ENCODE measurements at regions of chr1 and their contacts with region 1.

Region 1: GRCh38 chr1:16078925-16079656 is 5.6 kb upstream of the FAM131C start:
- DNase-seq: peak; percentile 54 to 87 (median 76)
- ATAC-seq: peak; percentile 83
- H3K4me3 ChIP-seq: peak overlapping the region; percentile 41 to 53
- H3K4me3 Mint-ChIP-seq: peak overlapping the region; percentile 81
- H3K27ac ChIP-seq: peak overlapping the region in 1 of 2 experiments; percentile 28
- H3K27ac Mint-ChIP-seq: peak overlapping the region; percentile 32
- H3K4me1 ChIP-seq: peaks cover 6% of the 10 kb centered on the region
- H3K4me1 Mint-ChIP-seq: peaks cover 11% of the 10 kb centered on the region
- H3K27me3 ChIP-seq: peaks cover 0 to under 1% of the 10 kb centered on the region in 2 experiments
- H3K27me3 Mint-ChIP-seq: peaks cover 9% of the 10 kb centered on the region
- CTCF ChIP-seq: peak; percentile 82

Region 2: GRCh38 chr1:16067127-16067768 is 11.8 kb before region 1 on chr1:
- CTCF ChIA-PET with region 1: interaction called, 40 read pairs
- POLR2A ChIA-PET with region 1: no interaction called
- intact Hi-C with region 1: no loop called
- DNase-seq: no peak
- ATAC-seq: no peak
- H3K4me3 ChIP-seq: no peak overlapping the region
- H3K4me3 Mint-ChIP-seq: no peak overlapping the region
- H3K27ac ChIP-seq: no peak overlapping the region
- H3K27ac Mint-ChIP-seq: no peak overlapping the region
- H3K4me1 ChIP-seq: peaks cover 6% of the 10 kb centered on the region
- H3K4me1 Mint-ChIP-seq: peaks cover 14% of the 10 kb centered on the region
- H3K27me3 ChIP-seq: peaks cover 2% of the 10 kb centered on the region in 2 experiments
- H3K27me3 Mint-ChIP-seq: peaks cover 7% of the 10 kb centered on the region
- CTCF ChIP-seq: no peak

Region 3: DNA sequence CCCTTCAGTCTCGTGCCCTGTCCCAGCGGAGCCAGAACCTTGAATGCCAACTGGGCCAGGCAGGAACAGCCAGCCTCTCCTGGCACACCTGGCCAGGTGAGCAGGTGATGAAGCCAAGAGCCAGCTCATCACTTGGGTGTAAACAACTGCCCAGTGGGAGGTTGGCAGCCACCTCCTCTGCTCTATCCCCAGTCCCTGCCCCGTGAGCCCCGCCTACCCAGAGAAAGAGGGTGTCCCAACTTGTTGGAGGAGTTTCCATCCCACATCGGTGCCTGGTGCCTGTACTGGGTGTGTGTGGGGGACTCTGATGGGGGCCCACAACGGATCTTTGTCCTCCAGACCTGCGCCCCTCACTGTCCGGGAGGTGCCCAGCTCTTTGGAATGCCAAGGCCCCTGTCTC is 12.2 kb after region 1 on chr1:
- CTCF ChIA-PET with region 1: interaction called, 11 read pairs
- POLR2A ChIA-PET with region 1: no interaction called
- intact Hi-C with region 1: no loop called
- DNase-seq: no peak
- ATAC-seq: no peak
- H3K4me3 ChIP-seq: no peak overlapping the region
- H3K4me3 Mint-ChIP-seq: no peak overlapping the region
- H3K27ac ChIP-seq: no peak overlapping the region
- H3K27ac Mint-ChIP-seq: no peak overlapping the region
- H3K4me1 ChIP-seq: no peaks in the 10 kb centered on the region
- H3K4me1 Mint-ChIP-seq: no peaks in the 10 kb centered on the region
- H3K27me3 ChIP-seq: no peaks in the 10 kb centered on the region
- H3K27me3 Mint-ChIP-seq: peaks cover 1% of the 10 kb centered on the region
- CTCF ChIP-seq: no peak

Region 4: DNA sequence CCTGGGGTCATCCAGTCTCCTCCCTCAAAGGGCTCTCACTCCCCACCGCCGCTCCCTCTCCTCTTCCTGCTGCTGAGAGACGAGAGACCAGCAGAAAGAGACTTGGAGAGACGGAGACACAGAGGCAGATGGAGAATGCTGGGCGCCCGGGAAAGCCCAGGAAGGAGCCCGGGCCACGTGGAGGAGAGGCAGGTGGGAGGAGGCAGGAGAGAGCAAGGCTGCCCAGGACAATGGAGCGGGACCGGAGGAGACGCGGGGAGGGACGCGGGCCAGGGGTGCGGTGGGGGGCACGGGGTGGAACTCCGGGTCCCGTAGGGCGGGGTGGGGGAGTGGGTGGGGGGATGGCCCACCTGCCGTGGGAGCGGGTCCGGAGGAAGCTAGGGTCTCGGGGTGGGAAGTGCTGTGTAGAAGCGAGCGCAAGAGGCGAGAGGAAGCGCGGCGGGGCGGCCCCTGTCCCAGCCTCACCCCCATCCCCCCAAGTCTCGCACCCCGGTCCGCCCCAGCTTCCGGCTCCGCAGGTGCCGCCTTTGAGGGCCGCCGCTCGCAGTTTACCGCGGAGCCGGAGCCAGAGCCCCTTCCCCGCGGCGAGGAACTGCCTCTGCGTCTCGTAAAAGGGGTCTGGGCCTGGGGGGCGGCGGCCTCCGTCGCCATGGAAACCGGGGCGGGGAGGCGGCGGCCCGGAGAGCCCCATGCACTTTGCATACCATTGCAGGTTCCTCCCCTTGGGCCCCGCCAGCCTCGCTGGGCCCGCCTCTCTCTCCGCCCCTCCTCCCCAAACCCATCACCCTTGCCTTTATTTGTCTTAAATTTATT is 88.4 kb after region 1 on chr1:
- CTCF ChIA-PET with region 1: interaction called, 15 read pairs
- POLR2A ChIA-PET with region 1: no interaction called
- intact Hi-C with region 1: no loop called
- DNase-seq: peak; percentile 32 to 84 (median 68)
- ATAC-seq: peak; percentile 85
- H3K4me3 ChIP-seq: peak overlapping the region; percentile 30 to 43
- H3K4me3 Mint-ChIP-seq: peak overlapping the region; percentile 65
- H3K27ac ChIP-seq: no peak overlapping the region
- H3K27ac Mint-ChIP-seq: no peak overlapping the region
- H3K4me1 ChIP-seq: peaks cover 49% of the 10 kb centered on the region
- H3K4me1 Mint-ChIP-seq: peaks cover 45% of the 10 kb centered on the region
- H3K27me3 ChIP-seq: peaks cover 0 to 12% of the 10 kb centered on the region in 2 experiments
- H3K27me3 Mint-ChIP-seq: peaks cover 8% of the 10 kb centered on the region
- CTCF ChIP-seq: no peak

Region 5: GRCh38 chr1:16187748-16188401 is 108.8 kb after region 1 on chr1:
- CTCF ChIA-PET with region 1: interaction called, 473 read pairs
- POLR2A ChIA-PET with region 1: interaction called, 7 read pairs
- intact Hi-C with region 1: loop called (anchors 1 kb)
- DNase-seq: peak; percentile 55 to 89 (median 76)
- ATAC-seq: peak; percentile 97
- H3K4me3 ChIP-seq: no peak overlapping the region
- H3K4me3 Mint-ChIP-seq: no peak overlapping the region
- H3K27ac ChIP-seq: no peak overlapping the region
- H3K27ac Mint-ChIP-seq: no peak overlapping the region
- H3K4me1 ChIP-seq: peaks cover 5% of the 10 kb centered on the region
- H3K4me1 Mint-ChIP-seq: peaks cover 4% of the 10 kb centered on the region
- H3K27me3 ChIP-seq: peaks cover 0 to 2% of the 10 kb centered on the region in 2 experiments
- H3K27me3 Mint-ChIP-seq: peaks cover 7% of the 10 kb centered on the region
- CTCF ChIP-seq: peak; percentile 97

Region 6: GRCh38 chr1:16243936-16244649 is 165.0 kb after region 1 on chr1:
- CTCF ChIA-PET with region 1: interaction called, 35 read pairs
- POLR2A ChIA-PET with region 1: interaction called, 4 read pairs
- intact Hi-C with region 1: loop called (anchors 1 kb)
- DNase-seq: peak; percentile 54 to 84 (median 77)
- ATAC-seq: peak; percentile 98
- H3K4me3 ChIP-seq: no peak overlapping the region
- H3K4me3 Mint-ChIP-seq: no peak overlapping the region
- H3K27ac ChIP-seq: peak overlapping the region in 1 of 2 experiments; percentile 3
- H3K27ac Mint-ChIP-seq: peak overlapping the region; percentile 41
- H3K4me1 ChIP-seq: peaks cover 3% of the 10 kb centered on the region
- H3K4me1 Mint-ChIP-seq: peaks cover 9% of the 10 kb centered on the region
- H3K27me3 ChIP-seq: no peaks in the 10 kb centered on the region
- H3K27me3 Mint-ChIP-seq: no peaks in the 10 kb centered on the region
- CTCF ChIP-seq: peak; percentile 74

Region 7: DNA sequence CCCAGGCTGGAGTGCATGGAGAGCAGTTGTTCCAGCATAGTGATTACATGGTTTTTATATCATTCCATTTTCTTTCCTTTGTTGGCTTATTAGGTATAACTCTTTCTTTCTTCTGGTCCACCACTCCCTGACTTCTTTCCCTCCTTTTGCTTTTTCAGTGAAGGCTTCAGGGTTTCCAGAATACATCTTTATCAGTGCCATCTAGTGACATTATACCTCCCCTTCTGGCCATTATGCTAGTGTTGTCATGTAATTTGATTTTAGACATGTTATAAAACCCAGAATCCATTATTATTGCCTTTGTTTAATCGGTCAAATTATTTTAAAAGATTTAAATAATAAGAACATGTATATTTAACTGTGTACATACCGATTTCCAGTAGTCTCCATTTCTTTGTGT is 424.4 kb after region 1 on chr1:
- CTCF ChIA-PET with region 1: no interaction called
- POLR2A ChIA-PET with region 1: no interaction called
- intact Hi-C with region 1: no loop called
- DNase-seq: no peak
- ATAC-seq: no peak
- H3K4me3 ChIP-seq: no peak overlapping the region
- H3K4me3 Mint-ChIP-seq: no peak overlapping the region
- H3K27ac ChIP-seq: no peak overlapping the region
- H3K27ac Mint-ChIP-seq: no peak overlapping the region
- H3K4me1 ChIP-seq: peaks cover 5% of the 10 kb centered on the region
- H3K4me1 Mint-ChIP-seq: peaks cover 11% of the 10 kb centered on the region
- H3K27me3 ChIP-seq: no peaks in the 10 kb centered on the region
- H3K27me3 Mint-ChIP-seq: no peaks in the 10 kb centered on the region
- CTCF ChIP-seq: no peak